ENCODE measurements at regions of chr1 and their contacts with region 1.

Region 1: GRCh38 chr1:92960395-92961130 is 699 bp downstream of the DIPK1A start:
- DNase-seq: peak; percentile 82
- H3K4me3 ChIP-seq: peak overlapping the region; percentile 82 to 91 (median 88)
- H3K27ac ChIP-seq: peak overlapping the region; percentile 96 to 99 (median 98)
- H3K4me1 ChIP-seq: peaks cover 0 to 46% (median 36%) of the 10 kb centered on the region in 4 donors
- H3K27me3 ChIP-seq: no peaks in the 10 kb centered on the region
- CTCF ChIP-seq: peak; percentile 41 to 75 (median 56)
- EP300 ChIP-seq: no peak
- POLR2A ChIP-seq: no peak

Region 2: DNA sequence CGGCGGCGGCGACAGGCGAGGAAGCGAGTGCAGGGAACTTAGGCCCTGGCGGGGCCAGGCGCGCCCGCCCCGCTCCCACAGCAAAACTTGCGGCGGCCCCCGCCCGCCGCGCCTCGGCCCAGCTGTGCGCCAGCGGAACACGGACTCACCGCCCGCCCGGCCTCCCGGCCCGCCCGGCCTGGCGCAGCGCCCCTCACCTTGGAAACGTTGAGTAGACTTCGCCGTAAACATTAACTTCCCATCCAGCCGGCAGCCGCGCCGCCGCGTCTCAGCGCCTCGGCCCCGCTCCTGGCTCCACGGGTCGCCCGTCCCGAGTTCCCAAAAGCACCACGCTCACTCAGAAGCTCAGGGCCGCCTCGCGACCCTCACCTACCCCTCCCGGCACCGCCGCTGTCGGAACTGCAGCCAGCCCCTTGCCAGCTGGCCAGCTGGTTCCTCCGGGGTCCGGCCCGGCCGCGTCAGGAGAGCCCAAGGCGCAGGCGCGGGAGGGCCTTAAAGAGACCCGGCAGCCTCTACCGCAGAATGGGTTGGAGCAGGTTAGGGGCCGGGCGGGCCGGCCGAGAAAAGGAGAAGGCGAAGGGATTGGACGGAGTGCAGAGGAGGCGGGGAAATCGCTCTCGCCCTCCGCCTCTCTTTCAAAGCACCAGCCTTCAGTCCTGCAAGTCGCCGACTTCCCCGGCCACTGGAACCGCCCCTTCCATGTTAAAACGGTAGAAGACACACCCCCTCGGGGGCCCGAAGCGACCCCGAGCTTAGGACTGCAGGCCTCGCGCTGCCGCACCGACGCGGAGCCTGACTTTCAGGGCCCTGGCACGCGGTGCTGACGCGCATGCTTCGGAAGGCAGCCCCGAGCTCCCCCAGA is 175.7 kb before region 1 on chr1 and contains the start of gene EVI5:
- intact Hi-C with region 1: loop called (anchors 10 kb)
- DNase-seq: peak; percentile 97
- H3K4me3 ChIP-seq: peak within 1 kb of the TSS; percentile 63 to 84 (median 76)
- H3K27ac ChIP-seq: peak within 1 kb of the TSS; percentile 92 to 99 (median 98)
- H3K4me1 ChIP-seq: peaks cover 0 to 25% (median 14%) of the 10 kb centered on the region in 4 donors
- H3K27me3 ChIP-seq: no peaks in the 10 kb centered on the region
- CTCF ChIP-seq: peak in 2 of 4 experiments; percentile 19 to 35
- EP300 ChIP-seq: peak in 1 of 4 donors; percentile 6
- POLR2A ChIP-seq: peak; percentile 38 to 63
- total RNA-seq, gene EVI5: 39.9 to 53.5 (median 46.5) TPM

Region 3: GRCh38 chr1:92831762-92832536 is 128.6 kb before region 1 on chr1 and contains the start of gene RPL5:
- intact Hi-C with region 1: loop called (anchors 2 kb)
- DNase-seq: peak; percentile 98
- H3K4me3 ChIP-seq: peak within 1 kb of the TSS; percentile 75 to 93 (median 81)
- H3K27ac ChIP-seq: peak within 1 kb of the TSS; percentile 91 to 97 (median 94)
- H3K4me1 ChIP-seq: peaks cover 0 to 44% (median 39%) of the 10 kb centered on the region in 4 donors
- H3K27me3 ChIP-seq: no peaks in the 10 kb centered on the region
- CTCF ChIP-seq: peak; percentile 85 to 91 (median 89)
- EP300 ChIP-seq: peak in 1 of 4 donors; percentile 57
- POLR2A ChIP-seq: peak; percentile 92 to 95
- total RNA-seq, gene RPL5: 2,086 to 3,236 (median 2,650) TPM

Region 4: DNA sequence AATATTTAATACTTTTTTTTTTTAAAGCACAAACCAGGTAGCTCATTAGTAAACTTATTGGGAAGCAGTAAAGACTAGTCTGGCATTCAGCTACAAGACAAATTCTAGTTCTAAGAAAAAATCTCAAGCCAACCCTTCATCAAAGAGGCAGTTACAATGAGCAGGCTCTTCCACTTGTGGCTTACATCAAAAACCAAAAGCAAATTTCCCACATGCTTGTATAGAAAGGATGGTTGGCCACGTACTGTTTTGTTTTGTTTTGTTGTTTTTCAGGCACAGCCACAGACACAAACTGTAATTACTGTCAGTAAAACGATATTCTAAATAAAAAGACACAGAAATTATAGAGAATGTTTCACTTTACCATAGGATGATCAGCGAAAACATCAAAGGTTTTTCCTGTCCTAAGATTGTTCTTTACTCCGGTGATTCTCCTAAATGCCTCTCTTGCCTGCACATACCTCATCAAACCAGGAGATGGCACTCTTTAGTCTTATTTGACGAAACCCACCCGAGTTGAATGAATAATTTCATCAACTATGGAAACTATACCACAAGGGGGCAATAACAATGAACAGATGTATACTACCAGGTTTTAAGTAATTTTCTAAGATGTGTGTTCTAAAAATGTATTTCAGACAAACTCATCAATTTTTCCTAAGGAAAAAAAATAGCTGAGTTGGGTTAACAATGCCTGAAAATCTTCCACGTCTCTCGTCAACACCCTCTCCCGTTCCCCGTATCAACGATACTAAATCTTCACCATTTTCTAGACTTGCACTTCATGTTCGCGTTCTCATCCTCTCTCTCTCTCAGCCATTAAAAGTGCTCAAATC is 101.8 kb before region 1 on chr1:
- intact Hi-C with region 1: loop called (anchors 1 kb)
- DNase-seq: peak; percentile 68
- H3K4me3 ChIP-seq: peak overlapping the region; percentile 1 to 38 (median 18)
- H3K27ac ChIP-seq: peak overlapping the region in 3 of 4 donors; percentile 30 to 52 (median 41)
- H3K4me1 ChIP-seq: peaks cover 0 to 11% (median 4%) of the 10 kb centered on the region in 4 donors
- H3K27me3 ChIP-seq: no peaks in the 10 kb centered on the region
- CTCF ChIP-seq: peak; percentile 94 to 99 (median 96)
- EP300 ChIP-seq: no peak
- POLR2A ChIP-seq: no peak

Region 5: DNA sequence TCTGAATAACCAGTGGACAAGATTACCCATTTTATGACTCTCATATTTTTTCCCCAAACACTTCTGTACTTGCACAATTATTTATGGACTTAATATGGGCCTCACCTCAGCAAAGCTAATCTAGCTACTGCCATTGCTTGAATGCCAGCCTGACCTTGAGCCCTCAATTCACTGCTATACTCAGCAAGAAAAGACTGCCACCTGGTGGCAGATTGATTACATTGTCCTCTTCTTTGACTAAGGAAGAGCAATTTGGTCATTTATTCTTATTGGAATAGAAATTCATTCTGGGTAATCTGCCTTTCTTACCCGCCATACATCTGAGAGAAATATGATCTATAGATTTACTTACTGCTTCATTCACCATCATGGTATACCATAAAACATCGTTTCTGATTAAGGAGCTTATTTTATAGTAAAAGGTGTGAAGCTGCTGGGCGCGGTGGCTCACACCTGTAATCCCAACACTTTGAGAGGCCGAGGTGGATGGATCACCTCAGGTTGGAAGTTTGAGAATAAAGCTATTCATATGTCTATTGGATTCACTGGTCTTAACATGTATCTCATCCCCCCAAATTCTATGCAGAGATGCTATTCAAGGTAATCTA is 33.6 kb after region 1 on chr1:
- intact Hi-C with region 1: loop called (anchors 2 kb)
- DNase-seq: peak; percentile 89
- H3K4me3 ChIP-seq: no peak overlapping the region
- H3K27ac ChIP-seq: peak overlapping the region in 2 of 4 donors; percentile 17 to 19
- H3K4me1 ChIP-seq: peaks cover 0 to 5% (median 0%) of the 10 kb centered on the region in 4 donors
- H3K27me3 ChIP-seq: no peaks in the 10 kb centered on the region
- CTCF ChIP-seq: peak; percentile 80 to 92 (median 86)
- EP300 ChIP-seq: no peak
- POLR2A ChIP-seq: no peak

Region 6: GRCh38 chr1:93345633-93346420 is 385.3 kb after region 1 on chr1 and contains the start of gene DR1:
- intact Hi-C with region 1: loop called (anchors 5 kb)
- DNase-seq: peak; percentile 97
- H3K4me3 ChIP-seq: peak within 1 kb of the TSS; percentile 91 to 99 (median 96)
- H3K27ac ChIP-seq: peak within 1 kb of the TSS; percentile 94 to 98 (median 96)
- H3K4me1 ChIP-seq: peaks cover 0 to 69% (median 32%) of the 10 kb centered on the region in 4 donors
- H3K27me3 ChIP-seq: no peaks in the 10 kb centered on the region
- CTCF ChIP-seq: no peak
- EP300 ChIP-seq: peak in 2 of 4 donors; percentile 57 to 72
- POLR2A ChIP-seq: peak; percentile 84 to 90
- total RNA-seq, gene DR1: 19.9 to 24.2 (median 20.3) TPM

Measured in sigmoid colon (tissue), 7 donors.